CD4-positive, alpha-beta memory T cell (primary cell): ENCODE measurements at regions of chr17 and their contacts with region 1.

Region 1: GRCh38 chr17:43360739-43361505 is 37.9 kb upstream of the ARL4D start:
- DNase-seq: peak; percentile 90 to 98 (median 93)
- H3K4me3 ChIP-seq: peak overlapping the region; percentile 68 to 77
- H3K4me3 Mint-ChIP-seq: peak overlapping the region; percentile 90 to 99 (median 94)
- H3K27ac ChIP-seq: peak overlapping the region; percentile 93
- H3K27ac Mint-ChIP-seq: peak overlapping the region; percentile 97 to 100 (median 99)
- H3K4me1 ChIP-seq: peaks cover 17% of the 10 kb centered on the region
- H3K4me1 Mint-ChIP-seq: peaks cover 14 to 35% (median 24%) of the 10 kb centered on the region in 4 donors
- H3K27me3 ChIP-seq: no peaks in the 10 kb centered on the region
- H3K27me3 Mint-ChIP-seq: no peaks in the 10 kb centered on the region

Region 2: GRCh38 chr17:42609182-42609813 is 751.6 kb before region 1 on chr17 and contains the starts of genes RETREG3 and TUBG1:
- CTCF ChIA-PET with region 1: no interaction called
- POLR2A ChIA-PET with region 1: interaction called, 10 read pairs
- intact Hi-C with region 1: no loop called
- DNase-seq: peak; percentile 98 to 100 (median 100)
- H3K4me3 ChIP-seq: peak within 1 kb of the TSS; percentile 87 to 92
- H3K4me3 Mint-ChIP-seq: peak within 1 kb of the TSS; percentile 99 to 100 (median 100)
- H3K27ac ChIP-seq: peak within 1 kb of the TSS; percentile 85
- H3K27ac Mint-ChIP-seq: peak within 1 kb of the TSS; percentile 90 to 100 (median 99)
- H3K4me1 ChIP-seq: peaks cover 47% of the 10 kb centered on the region
- H3K4me1 Mint-ChIP-seq: peaks cover 25 to 55% (median 40%) of the 10 kb centered on the region in 4 donors
- H3K27me3 ChIP-seq: no peaks in the 10 kb centered on the region
- H3K27me3 Mint-ChIP-seq: no peaks in the 10 kb centered on the region
- total RNA-seq, gene RETREG3: 128 to 134 TPM
- total RNA-seq, gene TUBG1: 13.6 to 16.5 TPM

Region 3: GRCh38 chr17:43024407-43025289 is 336.3 kb before region 1 on chr17 and contains the start of gene RND2:
- CTCF ChIA-PET with region 1: no interaction called
- POLR2A ChIA-PET with region 1: interaction called, 21 read pairs
- intact Hi-C with region 1: no loop called
- DNase-seq: peak; percentile 79 to 90 (median 81)
- H3K4me3 ChIP-seq: peak within 1 kb of the TSS; percentile 65 to 81
- H3K4me3 Mint-ChIP-seq: peak within 1 kb of the TSS; percentile 87 to 95 (median 91)
- H3K27ac ChIP-seq: peak within 1 kb of the TSS; percentile 69
- H3K27ac Mint-ChIP-seq: peak within 1 kb of the TSS; percentile 86 to 98 (median 96)
- H3K4me1 ChIP-seq: peaks cover 32% of the 10 kb centered on the region
- H3K4me1 Mint-ChIP-seq: peaks cover 9 to 35% (median 27%) of the 10 kb centered on the region in 4 donors
- H3K27me3 ChIP-seq: no peaks in the 10 kb centered on the region
- H3K27me3 Mint-ChIP-seq: no peaks in the 10 kb centered on the region
- total RNA-seq, gene RND2: 0.28 to 0.29 TPM

Region 4: DNA sequence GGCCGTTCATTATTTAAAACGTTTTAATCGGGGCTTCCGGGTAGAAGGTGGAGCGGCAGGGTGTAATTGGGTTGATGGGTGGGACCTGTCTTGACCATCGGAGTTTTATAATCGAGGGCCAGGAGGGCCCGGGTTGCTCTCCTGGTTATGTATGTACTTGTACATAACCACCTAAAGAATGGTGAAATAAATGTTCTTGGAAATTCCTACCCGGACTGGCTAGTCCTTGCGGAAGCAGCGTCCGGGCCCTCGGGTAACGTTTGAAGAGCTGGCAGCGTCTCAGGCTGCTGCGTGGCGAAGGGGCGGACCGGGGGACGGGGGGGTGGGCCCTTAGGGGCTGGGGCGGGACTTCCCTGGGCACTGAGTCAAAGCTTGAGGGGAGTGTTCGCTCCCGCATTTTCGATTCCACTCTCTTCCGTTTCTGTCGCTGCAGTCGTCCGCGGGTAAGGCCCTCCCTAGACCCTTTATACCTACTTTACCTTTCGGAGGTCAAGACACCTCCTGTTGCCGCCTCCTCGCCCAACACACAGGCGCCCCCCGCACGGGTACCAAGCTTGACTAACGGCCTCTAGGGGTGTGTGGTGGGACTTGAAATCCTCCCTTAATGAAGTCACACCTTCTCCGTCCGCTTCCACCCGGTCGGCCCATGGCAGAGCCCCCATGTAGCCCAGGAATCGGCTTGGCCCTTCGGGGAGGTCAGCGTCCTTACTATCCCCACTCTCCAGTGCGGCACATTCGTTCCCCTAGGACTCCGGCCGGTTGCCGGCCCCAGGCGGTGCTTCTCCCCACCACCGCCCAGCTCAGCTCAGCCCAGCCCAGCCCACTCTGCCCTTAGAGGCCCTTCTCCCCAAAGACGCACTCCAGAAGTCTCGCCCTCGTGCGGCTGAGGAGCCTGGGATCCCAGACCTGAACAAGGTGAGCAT is 149.2 kb before region 1 on chr17 and contains the start of gene TMEM106A:
- CTCF ChIA-PET with region 1: no interaction called
- POLR2A ChIA-PET with region 1: interaction called, 54 read pairs
- intact Hi-C with region 1: no loop called
- DNase-seq: peak; percentile 72 to 76 (median 74)
- H3K4me3 ChIP-seq: peak within 1 kb of the TSS; percentile 82 to 86
- H3K4me3 Mint-ChIP-seq: peak within 1 kb of the TSS; percentile 92 to 100 (median 99)
- H3K27ac ChIP-seq: peak within 1 kb of the TSS; percentile 87
- H3K27ac Mint-ChIP-seq: peak within 1 kb of the TSS; percentile 84 to 99 (median 98)
- H3K4me1 ChIP-seq: peaks cover 22% of the 10 kb centered on the region
- H3K4me1 Mint-ChIP-seq: peaks cover 17 to 43% (median 28%) of the 10 kb centered on the region in 4 donors
- H3K27me3 ChIP-seq: no peaks in the 10 kb centered on the region
- H3K27me3 Mint-ChIP-seq: no peaks in the 10 kb centered on the region
- total RNA-seq, gene TMEM106A: 12.5 to 12.8 TPM

Region 5: DNA sequence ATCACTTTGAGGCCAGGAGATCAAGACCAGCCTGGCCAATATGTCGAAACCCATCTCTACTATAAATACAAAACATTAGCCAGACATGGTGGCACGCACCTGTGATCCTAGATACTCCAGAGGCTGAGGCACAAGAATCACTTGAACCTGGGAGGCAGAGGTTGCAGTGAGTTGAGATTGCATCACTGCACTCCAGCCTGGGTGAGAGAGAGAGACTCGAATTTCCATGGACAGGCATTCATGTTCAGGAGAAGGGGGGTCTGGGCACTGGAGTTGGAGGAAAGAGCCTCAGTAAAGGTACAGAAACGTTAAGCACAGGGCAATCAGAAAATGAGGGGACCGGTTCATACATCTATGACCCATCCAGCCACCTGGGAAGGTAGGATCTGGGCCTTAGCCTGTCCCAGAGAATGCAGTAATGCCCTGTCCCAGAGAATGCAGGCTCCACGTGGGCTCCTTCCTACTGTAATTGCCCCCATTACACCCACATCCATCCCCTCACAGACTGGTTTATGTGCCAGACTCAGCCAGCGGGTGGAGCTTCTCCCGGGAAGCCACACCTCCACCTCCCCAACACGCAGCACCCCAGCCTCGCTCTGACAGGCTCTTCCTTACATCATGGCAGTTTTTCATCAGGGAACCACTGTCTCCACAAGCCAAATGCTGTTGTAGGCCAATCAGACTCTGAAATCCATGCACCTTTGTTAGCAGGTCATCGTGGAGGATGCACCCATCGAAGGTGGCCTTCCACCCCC is 16.3 kb after region 1 on chr17:
- CTCF ChIA-PET with region 1: interaction called, 4 read pairs
- POLR2A ChIA-PET with region 1: interaction called, 38 read pairs
- intact Hi-C with region 1: no loop called
- DNase-seq: no peak
- H3K4me3 ChIP-seq: no peak overlapping the region
- H3K4me3 Mint-ChIP-seq: no peak overlapping the region
- H3K27ac ChIP-seq: no peak overlapping the region
- H3K27ac Mint-ChIP-seq: no peak overlapping the region
- H3K4me1 ChIP-seq: no peaks in the 10 kb centered on the region
- H3K4me1 Mint-ChIP-seq: peaks cover 4 to 10% (median 6%) of the 10 kb centered on the region in 4 donors
- H3K27me3 ChIP-seq: no peaks in the 10 kb centered on the region
- H3K27me3 Mint-ChIP-seq: no peaks in the 10 kb centered on the region

Region 6: GRCh38 chr17:43483674-43484372 is 122.9 kb after region 1 on chr17 and contains the start of gene DHX8:
- CTCF ChIA-PET with region 1: interaction called, 8 read pairs
- POLR2A ChIA-PET with region 1: interaction called, 97 read pairs
- intact Hi-C with region 1: loop called (anchors 1 kb)
- DNase-seq: peak; percentile 97 to 99 (median 98)
- H3K4me3 ChIP-seq: peak within 1 kb of the TSS; percentile 84 to 98
- H3K4me3 Mint-ChIP-seq: peak within 1 kb of the TSS; percentile 96 to 100 (median 100)
- H3K27ac ChIP-seq: peak within 1 kb of the TSS; percentile 78
- H3K27ac Mint-ChIP-seq: peak within 1 kb of the TSS; percentile 93 to 100 (median 99)
- H3K4me1 ChIP-seq: peaks cover 25% of the 10 kb centered on the region
- H3K4me1 Mint-ChIP-seq: peaks cover 17 to 39% (median 29%) of the 10 kb centered on the region in 4 donors
- H3K27me3 ChIP-seq: no peaks in the 10 kb centered on the region
- H3K27me3 Mint-ChIP-seq: peaks cover 0 to 1% of the 10 kb centered on the region in 2 donors
- total RNA-seq, gene DHX8: 75.8 to 78.2 TPM